ENCODE measurements at regions of chr1 and their contacts with region 1.

Region 1: DNA sequence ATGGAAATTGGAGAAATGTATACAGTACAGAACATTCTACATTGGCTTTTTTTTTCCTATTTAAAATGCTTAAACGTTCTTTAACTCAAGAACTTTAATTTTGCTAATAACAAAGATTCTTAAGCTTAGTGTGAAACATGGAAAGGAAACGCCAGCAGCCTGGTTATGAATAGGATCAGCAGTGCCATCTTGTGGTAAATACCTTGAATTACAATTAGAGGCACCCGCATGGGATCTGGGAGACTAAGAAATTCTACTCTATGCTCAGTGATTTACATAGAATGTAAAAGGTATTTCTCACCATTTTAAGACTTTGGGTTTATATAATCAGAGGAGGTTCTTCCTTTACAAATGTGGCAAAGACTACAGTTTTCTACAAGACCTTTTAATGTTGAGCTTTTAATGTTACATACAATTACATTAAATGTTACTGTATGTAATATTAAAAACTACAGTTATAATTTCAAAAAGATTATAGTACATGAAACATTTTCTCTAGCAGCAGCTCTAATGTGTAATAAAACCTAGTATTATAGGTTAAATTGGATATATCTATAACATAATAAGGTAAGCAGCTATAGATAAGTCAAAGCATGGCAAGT is 32.1 kb upstream of the APOBEC4 start:
- DNase-seq: peak; percentile 47
- H3K4me3 Mint-ChIP-seq: no peak overlapping the region
- H3K27ac Mint-ChIP-seq: no peak overlapping the region
- H3K4me1 Mint-ChIP-seq: peaks cover 10% of the 10 kb centered on the region
- H3K27me3 Mint-ChIP-seq: no peaks in the 10 kb centered on the region
- CTCF ChIP-seq: peak; percentile 66

Region 2: GRCh38 chr1:183655562-183656075 is 29.6 kb before region 1 on chr1:
- CTCF ChIA-PET with region 1: interaction called, 26 read pairs
- intact Hi-C with region 1: loop called (anchors 1 kb)
- DNase-seq: peak; percentile 86
- H3K4me3 Mint-ChIP-seq: no peak overlapping the region
- H3K27ac Mint-ChIP-seq: no peak overlapping the region
- H3K4me1 Mint-ChIP-seq: peaks cover 5% of the 10 kb centered on the region
- H3K27me3 Mint-ChIP-seq: peaks cover 5% of the 10 kb centered on the region
- CTCF ChIP-seq: peak; percentile 79

Region 3: DNA sequence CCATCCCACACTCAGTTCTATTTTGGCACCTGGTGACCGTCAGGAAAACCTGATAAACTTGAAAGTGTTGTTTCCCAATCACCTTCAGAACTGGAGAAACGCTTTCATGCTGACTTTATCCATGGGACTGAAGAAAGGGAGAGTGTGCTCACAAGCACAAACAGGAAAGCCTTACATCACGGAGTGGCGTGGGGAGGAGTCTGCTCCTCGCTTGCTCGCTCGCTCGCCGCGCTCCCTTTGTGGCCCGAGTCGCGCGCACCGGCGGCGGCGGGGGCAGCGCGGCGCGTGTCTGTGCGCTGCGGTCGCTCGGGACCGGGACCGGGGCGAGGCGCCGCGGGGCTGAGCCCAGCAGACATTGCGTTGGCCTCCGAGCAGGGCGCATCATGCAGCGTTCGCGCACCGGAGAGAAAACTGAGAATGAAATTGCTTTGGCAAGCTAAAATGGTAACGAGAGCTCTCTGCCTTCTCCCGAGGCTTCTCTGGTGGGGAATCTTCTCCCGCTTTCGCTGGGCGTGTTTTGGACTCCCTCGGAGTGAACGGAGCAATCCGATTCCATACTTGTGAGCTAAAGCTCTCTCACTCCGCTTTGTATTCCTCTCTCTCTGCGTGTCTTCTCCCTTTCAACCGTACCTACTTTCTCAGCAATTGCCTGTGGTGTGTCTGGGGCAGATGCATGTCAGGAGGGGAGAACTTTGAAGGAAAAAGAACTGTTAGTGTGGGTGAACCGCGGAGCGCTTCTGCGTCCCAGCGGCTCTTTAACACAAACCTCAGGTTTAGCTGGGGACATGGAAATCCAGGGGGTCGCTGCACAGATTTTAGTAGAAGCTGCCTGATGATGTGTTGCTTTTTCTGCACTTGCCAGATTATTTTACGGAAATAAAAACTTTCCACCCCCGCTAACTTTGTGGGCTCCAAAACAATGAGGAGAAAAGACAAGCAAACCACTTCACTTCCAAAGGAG is 119.9 kb after region 1 on chr1 and contains the start of gene RGL1:
- CTCF ChIA-PET with region 1: no interaction called
- intact Hi-C with region 1: loop called (anchors 10 kb)
- DNase-seq: peak; percentile 64
- H3K4me3 Mint-ChIP-seq: peak within 1 kb of the TSS; percentile 83
- H3K27ac Mint-ChIP-seq: peak within 1 kb of the TSS; percentile 32
- H3K4me1 Mint-ChIP-seq: no peaks in the 10 kb centered on the region
- H3K27me3 Mint-ChIP-seq: no peaks in the 10 kb centered on the region
- CTCF ChIP-seq: no peak
- total RNA-seq, gene RGL1: 2.7 and 4.8 TPM in 2 replicates

Region 4: DNA sequence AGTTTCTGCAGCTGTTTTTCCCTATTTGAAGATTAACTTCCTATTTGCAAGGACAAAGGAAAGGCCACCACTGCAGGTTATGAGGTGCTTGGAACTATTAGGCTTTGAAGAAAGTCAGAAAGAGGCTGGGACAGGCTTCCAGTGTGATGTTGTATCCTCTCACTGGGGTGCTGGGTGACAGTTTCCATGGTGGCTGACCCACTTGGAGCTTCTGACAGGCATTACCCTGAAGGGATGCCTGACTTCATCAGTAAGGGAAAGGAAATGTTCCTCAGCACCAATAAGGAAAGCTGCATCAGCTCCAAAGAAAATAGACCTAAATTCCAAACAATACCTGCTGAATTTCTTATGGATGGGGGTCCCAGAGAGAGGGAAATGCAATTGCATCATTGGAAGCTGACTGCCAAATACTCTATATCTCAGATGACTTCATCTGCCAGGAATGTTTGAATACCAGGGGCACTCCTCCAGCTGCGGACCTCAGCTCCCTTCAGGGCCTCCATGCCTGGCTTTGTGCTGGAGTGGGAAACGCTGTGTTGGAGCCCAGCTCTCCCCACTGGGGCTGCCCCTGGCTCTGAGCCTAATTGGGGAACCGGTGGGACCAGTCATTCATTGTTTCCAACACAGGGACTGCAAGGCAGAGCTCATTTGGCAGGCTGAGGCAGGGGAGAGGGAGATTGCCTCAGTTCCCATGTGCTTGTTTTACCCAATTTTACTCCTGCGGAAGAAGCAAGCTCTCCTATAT is 196.3 kb after region 1 on chr1:
- CTCF ChIA-PET with region 1: no interaction called
- intact Hi-C with region 1: loop called (anchors 5 kb)
- DNase-seq: peak; percentile 96
- H3K4me3 Mint-ChIP-seq: peak overlapping the region; percentile 54
- H3K27ac Mint-ChIP-seq: peak overlapping the region; percentile 97
- H3K4me1 Mint-ChIP-seq: peaks cover 83% of the 10 kb centered on the region
- H3K27me3 Mint-ChIP-seq: no peaks in the 10 kb centered on the region
- CTCF ChIP-seq: no peak